ENCODE measurements at regions of chr11 and their contacts with region 1.

Region 1: DNA sequence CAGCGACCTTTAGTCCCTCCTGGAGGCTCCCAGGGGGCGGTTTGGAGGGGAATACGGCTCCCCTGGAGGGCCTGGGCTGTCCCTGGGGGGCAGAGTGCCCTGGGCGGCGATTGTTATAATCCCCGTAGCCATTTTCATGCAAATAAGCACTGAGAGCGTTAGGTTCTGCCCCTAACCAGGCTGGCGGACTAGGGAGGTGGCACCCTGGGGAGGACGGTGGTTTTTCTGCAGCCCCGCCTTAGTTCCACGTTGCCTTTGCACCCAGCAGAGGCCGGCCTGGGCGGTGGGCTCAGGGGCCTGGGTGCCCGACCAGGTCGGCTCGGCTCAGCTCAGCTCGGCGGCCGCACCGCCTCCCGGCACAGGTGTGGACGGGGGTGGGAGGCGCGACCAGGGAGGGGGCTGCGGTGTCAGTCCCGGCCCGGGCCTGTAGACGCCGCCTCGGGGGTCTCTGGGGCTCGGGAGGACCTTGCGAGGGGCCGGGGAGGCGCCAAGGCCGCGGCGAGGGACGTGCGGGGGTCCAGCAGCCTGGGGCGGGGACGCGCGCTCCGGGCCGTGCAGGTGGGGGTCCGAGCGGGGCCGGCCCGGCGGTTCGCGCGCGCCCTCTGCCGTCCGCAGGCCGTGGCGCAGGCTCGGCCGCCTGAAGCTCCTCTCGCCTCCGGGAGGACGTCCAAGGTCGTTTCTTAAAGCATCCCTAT is 2.3 kb upstream of the DUSP8 start:
- DNase-seq: peak; percentile 27 to 60 (median 56)
- H3K4me3 ChIP-seq: peak overlapping the region in 4 of 7 experiments; percentile 16 to 54 (median 45)
- H3K27ac ChIP-seq: no peak overlapping the region
- H3K4me1 ChIP-seq: peaks cover 0 to 30% (median 20%) of the 10 kb centered on the region in 4 experiments
- H3K27me3 ChIP-seq: peaks cover 4 to 82% (median 24%) of the 10 kb centered on the region in 5 experiments

Region 2: GRCh38 chr11:1515082-1516060 is 59.0 kb before region 1 on chr11:
- CTCF ChIA-PET with region 1: interaction called, 10 read pairs
- POLR2A ChIA-PET with region 1: no interaction called
- DNase-seq: peak; percentile 39 to 70 (median 67)
- H3K4me3 ChIP-seq: no peak overlapping the region
- H3K27ac ChIP-seq: no peak overlapping the region
- H3K4me1 ChIP-seq: peaks cover 0 to 12% (median 3%) of the 10 kb centered on the region in 4 experiments
- H3K27me3 ChIP-seq: no peaks in the 10 kb centered on the region

Region 3: GRCh38 chr11:1546536-1547400 is 27.6 kb before region 1 on chr11:
- CTCF ChIA-PET with region 1: interaction called, 14 read pairs
- POLR2A ChIA-PET with region 1: no interaction called
- DNase-seq: peak in 2 of 3 donors; percentile 54 to 60
- H3K4me3 ChIP-seq: peak overlapping the region in 3 of 7 experiments; percentile 52 to 57 (median 54)
- H3K27ac ChIP-seq: no peak overlapping the region
- H3K4me1 ChIP-seq: peaks cover 0 to 26% (median 22%) of the 10 kb centered on the region in 4 experiments
- H3K27me3 ChIP-seq: peaks cover 0 to 67% (median 19%) of the 10 kb centered on the region in 5 experiments

Region 4: DNA sequence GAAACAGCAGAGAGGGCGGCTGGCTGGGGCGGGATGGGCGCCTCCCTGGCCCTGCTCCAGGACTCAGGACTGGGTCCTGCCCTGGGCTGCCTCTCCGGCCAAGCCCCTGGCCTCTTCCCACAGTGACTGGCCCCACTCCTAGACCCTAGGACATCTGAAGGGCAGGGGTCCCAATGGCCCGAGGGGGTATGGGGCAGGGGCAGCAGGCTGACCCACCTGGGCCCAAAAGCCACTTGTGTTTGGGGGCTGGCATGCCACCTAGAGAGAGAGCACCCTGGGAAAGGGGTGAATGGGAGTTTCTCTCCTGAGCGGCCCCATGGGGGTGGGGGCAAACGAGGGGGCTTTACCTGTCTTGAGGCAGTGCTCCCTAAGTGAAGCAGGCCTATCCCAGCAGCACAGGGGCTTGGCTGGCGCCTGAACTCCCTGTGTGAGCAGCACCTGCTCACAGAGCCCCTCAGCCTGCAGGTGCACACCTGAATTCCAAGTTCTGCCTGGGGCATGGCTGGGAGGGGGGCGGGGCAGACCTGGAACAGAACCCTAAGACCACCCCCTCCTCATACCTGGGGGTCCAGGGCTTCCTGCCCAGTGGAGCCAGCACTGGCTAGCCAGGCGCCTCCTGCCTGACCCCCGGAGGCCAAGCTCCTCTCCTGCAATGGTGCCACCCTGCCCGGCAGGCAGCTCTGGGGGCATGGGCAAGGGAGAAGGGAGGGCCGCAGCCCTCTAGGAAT is 19.2 kb before region 1 on chr11:
- CTCF ChIA-PET with region 1: interaction called, 10 read pairs
- POLR2A ChIA-PET with region 1: interaction called, 6 read pairs
- DNase-seq: no peak
- H3K4me3 ChIP-seq: no peak overlapping the region
- H3K27ac ChIP-seq: no peak overlapping the region
- H3K4me1 ChIP-seq: no peaks in the 10 kb centered on the region
- H3K27me3 ChIP-seq: peaks cover 0 to 79% (median 8%) of the 10 kb centered on the region in 5 experiments

Region 5: GRCh38 chr11:1592628-1593027 is 18.2 kb after region 1 on chr11:
- CTCF ChIA-PET with region 1: interaction called, 12 read pairs
- POLR2A ChIA-PET with region 1: no interaction called
- DNase-seq: no peak
- H3K4me3 ChIP-seq: no peak overlapping the region
- H3K27ac ChIP-seq: no peak overlapping the region
- H3K4me1 ChIP-seq: no peaks in the 10 kb centered on the region
- H3K27me3 ChIP-seq: peaks cover 3 to 89% (median 20%) of the 10 kb centered on the region in 5 experiments

Region 6: DNA sequence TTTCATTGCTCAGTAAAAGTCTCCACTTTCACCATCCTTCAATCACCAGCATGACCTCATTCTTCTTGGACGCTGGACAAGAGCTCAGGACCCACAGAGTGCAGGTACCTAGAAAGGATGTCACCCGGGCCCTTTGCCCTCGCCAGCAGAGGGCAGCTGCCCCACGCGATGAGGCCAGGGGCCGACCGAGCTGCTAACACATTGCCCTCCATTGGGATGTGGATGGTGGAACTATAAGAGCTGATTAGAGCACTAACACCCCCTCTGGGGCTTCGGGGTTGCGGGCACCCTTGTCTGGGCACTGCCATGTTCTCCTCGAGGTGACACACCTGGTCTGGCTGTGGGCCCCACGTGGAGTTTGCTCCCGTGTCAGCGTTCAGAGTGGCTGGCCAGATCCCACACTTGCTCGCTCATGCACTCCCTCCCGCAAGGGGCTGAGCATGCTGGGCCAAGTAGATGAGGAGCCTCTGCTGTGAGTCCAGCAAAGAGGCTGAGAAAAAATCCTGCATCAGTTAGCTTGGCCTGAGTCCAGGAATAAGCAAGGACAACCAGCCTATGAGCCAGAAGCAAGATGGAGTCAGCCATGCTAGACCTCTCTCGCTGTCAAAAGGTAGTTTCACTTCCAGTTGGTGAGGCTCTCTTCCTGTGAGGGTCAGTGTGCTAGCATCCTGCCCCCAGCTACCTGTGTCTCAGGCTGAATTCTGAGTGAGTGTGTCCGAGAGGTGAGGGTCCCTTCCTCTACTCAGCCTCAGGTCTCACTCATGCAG is 132.4 kb after region 1 on chr11:
- CTCF ChIA-PET with region 1: no interaction called
- POLR2A ChIA-PET with region 1: no interaction called
- DNase-seq: peak; percentile 31 to 50 (median 44)
- H3K4me3 ChIP-seq: no peak overlapping the region
- H3K27ac ChIP-seq: no peak overlapping the region
- H3K4me1 ChIP-seq: peaks cover 0 to 7% (median 0%) of the 10 kb centered on the region in 4 experiments
- H3K27me3 ChIP-seq: peaks cover 0 to 3% (median 0%) of the 10 kb centered on the region in 5 experiments

Measured in common myeloid progenitor, CD34-positive (primary cell).